B cell (primary cell): ENCODE measurements at regions of chr15 and their contacts with region 1.

Region 1: DNA sequence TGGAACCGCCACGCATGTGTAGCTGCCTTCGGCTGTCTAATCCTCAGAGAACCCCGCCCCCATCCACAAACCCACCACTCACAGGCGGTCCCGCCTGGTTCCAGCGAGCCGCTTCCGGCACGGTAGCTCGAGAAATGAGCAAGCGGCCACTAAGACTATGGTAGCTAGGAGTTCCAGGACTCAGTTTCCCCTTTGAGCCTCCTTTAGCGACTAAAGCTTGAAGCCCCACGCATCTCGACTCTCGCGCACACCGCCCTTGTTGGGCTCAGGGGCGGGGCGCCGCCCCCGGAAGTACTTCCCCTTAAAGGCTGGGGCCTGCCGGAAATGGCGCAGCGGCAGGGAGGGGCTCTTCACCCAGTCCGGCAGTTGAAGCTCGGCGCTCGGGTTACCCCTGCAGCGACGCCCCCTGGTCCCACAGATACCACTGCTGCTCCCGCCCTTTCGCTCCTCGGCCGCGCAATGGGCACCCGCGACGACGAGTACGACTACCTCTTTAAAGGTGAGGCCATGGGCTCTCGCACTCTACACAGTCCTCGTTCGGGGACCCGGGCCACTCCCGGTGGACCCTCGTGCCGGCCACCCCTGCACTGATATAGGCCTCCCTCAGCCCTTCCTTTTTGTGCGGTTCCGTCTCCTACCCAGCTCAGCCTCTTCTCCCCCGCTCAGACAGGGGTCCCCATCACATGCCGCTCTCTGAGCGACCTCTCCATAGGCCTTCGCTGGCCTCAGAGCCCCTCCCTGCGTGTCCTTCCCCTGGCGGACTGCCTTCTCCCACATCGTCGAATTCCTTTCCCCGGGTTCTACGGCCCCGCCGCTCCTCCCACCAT is at the start of gene RAB11A:
- DNase-seq: peak; percentile 99
- ATAC-seq: peak; percentile 92
- H3K4me3 ChIP-seq: peak within 1 kb of the TSS; percentile 79 to 99 (median 89)
- H3K4me3 Mint-ChIP-seq: peak within 1 kb of the TSS; percentile 99
- H3K27ac ChIP-seq: peak within 1 kb of the TSS; percentile 95 to 96
- H3K27ac Mint-ChIP-seq: peak within 1 kb of the TSS; percentile 99
- H3K4me1 ChIP-seq: peaks cover 16 to 17% of the 10 kb centered on the region in 2 donors
- H3K4me1 Mint-ChIP-seq: peaks cover 31% of the 10 kb centered on the region
- H3K27me3 ChIP-seq: no peaks in the 10 kb centered on the region
- H3K27me3 Mint-ChIP-seq: no peaks in the 10 kb centered on the region
- CTCF ChIP-seq: peak; percentile 59
- total RNA-seq, gene RAB11A: 80.1 and 83.2 TPM in 2 replicates

Region 2: GRCh38 chr15:65610871-65611718 is 258.2 kb before region 1 on chr15 and contains the start of gene INTS14:
- CTCF ChIA-PET with region 1: interaction called, 9 read pairs
- POLR2A ChIA-PET with region 1: interaction called, 7 read pairs
- intact Hi-C with region 1: loop called (anchors 1 kb)
- DNase-seq: peak; percentile 93
- ATAC-seq: peak; percentile 97
- H3K4me3 ChIP-seq: peak within 1 kb of the TSS; percentile 61 to 90 (median 85)
- H3K4me3 Mint-ChIP-seq: peak within 1 kb of the TSS; percentile 99
- H3K27ac ChIP-seq: peak within 1 kb of the TSS; percentile 78 to 95
- H3K27ac Mint-ChIP-seq: peak within 1 kb of the TSS; percentile 98
- H3K4me1 ChIP-seq: peaks cover 17 to 21% of the 10 kb centered on the region in 2 donors
- H3K4me1 Mint-ChIP-seq: peaks cover 38% of the 10 kb centered on the region
- H3K27me3 ChIP-seq: no peaks in the 10 kb centered on the region
- H3K27me3 Mint-ChIP-seq: no peaks in the 10 kb centered on the region
- CTCF ChIP-seq: peak; percentile 59
- total RNA-seq, gene INTS14: 37.8 and 39.0 TPM in 2 replicates

Region 3: DNA sequence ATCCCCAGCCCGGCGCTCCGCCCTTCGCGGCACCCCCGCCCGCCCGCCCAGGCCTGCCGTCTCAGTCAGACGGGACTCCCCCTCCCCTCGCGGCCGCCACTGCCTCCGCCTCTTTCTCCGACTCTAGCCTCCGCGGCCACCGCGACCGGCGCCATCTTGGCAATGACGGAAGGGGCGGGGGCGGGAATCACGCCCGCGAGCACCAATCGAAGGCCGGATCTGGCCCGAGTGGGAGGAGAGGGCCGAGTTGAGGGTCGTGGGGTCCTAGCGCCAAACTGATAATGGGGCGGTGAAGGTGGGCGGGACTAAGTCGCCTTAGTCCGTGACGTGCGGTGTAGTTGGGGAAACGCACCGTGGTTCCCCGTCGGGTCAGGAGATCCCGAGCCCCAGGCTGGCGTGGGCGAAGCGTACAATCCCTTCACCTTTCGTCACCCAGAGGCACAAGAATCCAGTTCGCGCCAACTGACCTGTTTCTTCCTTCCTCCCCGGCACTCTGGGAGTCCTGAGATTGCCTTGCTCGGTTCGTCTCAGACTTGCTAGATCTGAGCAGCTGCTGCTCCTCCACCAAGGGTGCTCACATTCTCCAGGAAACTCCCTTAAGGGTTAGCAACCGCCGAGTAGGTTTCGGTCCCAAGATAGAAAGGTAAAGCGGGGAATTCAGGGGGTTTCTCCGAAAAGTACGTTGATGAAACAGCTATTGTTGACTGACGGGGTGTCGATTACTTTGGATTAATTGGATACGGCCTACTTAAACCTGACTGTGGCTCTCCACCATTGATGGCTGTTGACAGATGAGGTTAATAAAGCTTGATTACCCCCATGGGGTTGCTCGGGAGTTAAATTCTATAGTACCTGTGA is 77.0 kb before region 1 on chr15 and contains the start of gene DENND4A:
- CTCF ChIA-PET with region 1: interaction called, 12 read pairs
- POLR2A ChIA-PET with region 1: interaction called, 14 read pairs
- intact Hi-C with region 1: loop called (anchors 1 kb)
- DNase-seq: peak; percentile 100
- ATAC-seq: peak; percentile 83
- H3K4me3 ChIP-seq: peak within 1 kb of the TSS; percentile 82 to 99 (median 95)
- H3K4me3 Mint-ChIP-seq: peak within 1 kb of the TSS; percentile 93
- H3K27ac ChIP-seq: peak within 1 kb of the TSS; percentile 99 to 100
- H3K27ac Mint-ChIP-seq: peak within 1 kb of the TSS; percentile 97
- H3K4me1 ChIP-seq: peaks cover 33 to 44% of the 10 kb centered on the region in 2 donors
- H3K4me1 Mint-ChIP-seq: peaks cover 50% of the 10 kb centered on the region
- H3K27me3 ChIP-seq: no peaks in the 10 kb centered on the region
- H3K27me3 Mint-ChIP-seq: no peaks in the 10 kb centered on the region
- CTCF ChIP-seq: no peak
- total RNA-seq, gene DENND4A: 103 and 114 TPM in 2 replicates

Region 4: GRCh38 chr15:65856821-65857455 is 12.4 kb before region 1 on chr15:
- CTCF ChIA-PET with region 1: interaction called, 45 read pairs
- POLR2A ChIA-PET with region 1: interaction called, 4 read pairs
- intact Hi-C with region 1: no loop called
- DNase-seq: peak; percentile 85
- ATAC-seq: peak; percentile 88
- H3K4me3 ChIP-seq: no peak overlapping the region
- H3K4me3 Mint-ChIP-seq: no peak overlapping the region
- H3K27ac ChIP-seq: no peak overlapping the region
- H3K27ac Mint-ChIP-seq: no peak overlapping the region
- H3K4me1 ChIP-seq: no peaks in the 10 kb centered on the region
- H3K4me1 Mint-ChIP-seq: peaks cover 11% of the 10 kb centered on the region
- H3K27me3 ChIP-seq: no peaks in the 10 kb centered on the region
- H3K27me3 Mint-ChIP-seq: no peaks in the 10 kb centered on the region
- CTCF ChIP-seq: peak; percentile 95

Region 5: DNA sequence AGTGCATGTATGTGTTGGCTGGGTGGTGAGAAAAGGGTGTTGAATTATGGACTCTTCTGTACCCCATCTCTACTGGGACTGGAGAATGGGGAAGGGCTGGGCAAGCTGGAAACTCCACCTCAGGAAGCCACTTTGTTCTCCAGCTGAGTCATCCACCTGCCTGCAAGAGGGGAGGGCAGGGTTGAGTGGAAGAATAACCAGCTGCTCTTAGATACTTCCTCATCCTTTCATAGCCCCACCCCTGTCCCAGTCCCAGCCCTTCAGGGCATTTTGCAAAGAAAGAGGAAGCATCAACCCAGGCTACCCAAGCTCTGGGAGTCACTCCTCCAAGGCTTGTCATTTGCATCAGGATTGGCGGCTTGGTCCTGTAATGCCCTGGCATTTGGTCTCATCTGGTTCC is 33.0 kb after region 1 on chr15:
- CTCF ChIA-PET with region 1: interaction called, 7 read pairs
- POLR2A ChIA-PET with region 1: interaction called, 14 read pairs
- intact Hi-C with region 1: loop called (anchors 1 kb)
- DNase-seq: peak; percentile 81
- ATAC-seq: peak; percentile 98
- H3K4me3 ChIP-seq: no peak overlapping the region
- H3K4me3 Mint-ChIP-seq: peak overlapping the region; percentile 41
- H3K27ac ChIP-seq: peak overlapping the region in 1 of 2 donors; percentile 32
- H3K27ac Mint-ChIP-seq: peak overlapping the region; percentile 68
- H3K4me1 ChIP-seq: peaks cover 22 to 37% of the 10 kb centered on the region in 2 donors
- H3K4me1 Mint-ChIP-seq: peaks cover 38% of the 10 kb centered on the region
- H3K27me3 ChIP-seq: no peaks in the 10 kb centered on the region
- H3K27me3 Mint-ChIP-seq: no peaks in the 10 kb centered on the region
- CTCF ChIP-seq: no peak

Region 6: DNA sequence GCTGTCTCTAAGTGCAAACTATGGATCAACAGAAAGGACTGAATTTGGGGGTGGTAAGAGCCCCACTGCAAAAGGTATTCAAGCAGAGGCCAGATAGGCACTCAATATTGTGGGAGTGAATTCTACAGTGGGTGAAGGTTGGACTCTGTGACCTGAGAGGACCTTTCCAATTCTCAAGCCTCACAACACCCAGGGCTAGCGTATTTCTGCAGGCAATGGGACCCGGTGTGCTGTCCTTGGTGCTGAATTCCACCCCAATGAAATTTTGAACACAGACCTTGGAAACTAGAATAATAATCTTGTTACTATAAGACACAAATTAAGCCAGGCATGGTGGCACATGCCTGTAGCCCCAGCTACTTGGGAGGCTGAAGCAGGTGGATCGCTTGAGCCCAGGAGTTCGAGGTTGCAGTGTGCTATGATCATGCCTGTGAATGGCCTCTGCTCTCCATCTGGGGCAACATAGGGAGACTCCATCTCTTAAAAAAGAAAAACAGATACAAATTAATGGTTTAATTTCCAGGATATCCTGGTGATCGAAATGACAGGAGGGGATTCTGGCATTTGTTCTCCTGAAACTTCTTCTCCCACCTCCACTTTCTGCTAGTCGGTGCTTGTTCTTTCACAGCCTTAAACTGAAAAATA is 135.4 kb after region 1 on chr15:
- CTCF ChIA-PET with region 1: no interaction called
- POLR2A ChIA-PET with region 1: no interaction called
- intact Hi-C with region 1: no loop called
- DNase-seq: no peak
- ATAC-seq: no peak
- H3K4me3 ChIP-seq: no peak overlapping the region
- H3K4me3 Mint-ChIP-seq: no peak overlapping the region
- H3K27ac ChIP-seq: no peak overlapping the region
- H3K27ac Mint-ChIP-seq: no peak overlapping the region
- H3K4me1 ChIP-seq: no peaks in the 10 kb centered on the region
- H3K4me1 Mint-ChIP-seq: no peaks in the 10 kb centered on the region
- H3K27me3 ChIP-seq: peaks cover 0 to 10% (median 2%) of the 10 kb centered on the region in 4 experiments
- H3K27me3 Mint-ChIP-seq: peaks cover 37% of the 10 kb centered on the region
- CTCF ChIP-seq: no peak

Region 7: GRCh38 chr15:66108483-66109265 is 239.3 kb after region 1 on chr15:
- CTCF ChIA-PET with region 1: no interaction called
- POLR2A ChIA-PET with region 1: no interaction called
- intact Hi-C with region 1: no loop called
- DNase-seq: no peak
- ATAC-seq: no peak
- H3K4me3 ChIP-seq: no peak overlapping the region
- H3K4me3 Mint-ChIP-seq: no peak overlapping the region
- H3K27ac ChIP-seq: no peak overlapping the region
- H3K27ac Mint-ChIP-seq: no peak overlapping the region
- H3K4me1 ChIP-seq: no peaks in the 10 kb centered on the region
- H3K4me1 Mint-ChIP-seq: no peaks in the 10 kb centered on the region
- H3K27me3 ChIP-seq: peaks cover 0 to 9% (median 3%) of the 10 kb centered on the region in 4 experiments
- H3K27me3 Mint-ChIP-seq: peaks cover 43% of the 10 kb centered on the region
- CTCF ChIP-seq: no peak